Caco-2 (cell line): ENCODE measurements at regions of chr11 and their contacts with region 1.

Region 1: DNA sequence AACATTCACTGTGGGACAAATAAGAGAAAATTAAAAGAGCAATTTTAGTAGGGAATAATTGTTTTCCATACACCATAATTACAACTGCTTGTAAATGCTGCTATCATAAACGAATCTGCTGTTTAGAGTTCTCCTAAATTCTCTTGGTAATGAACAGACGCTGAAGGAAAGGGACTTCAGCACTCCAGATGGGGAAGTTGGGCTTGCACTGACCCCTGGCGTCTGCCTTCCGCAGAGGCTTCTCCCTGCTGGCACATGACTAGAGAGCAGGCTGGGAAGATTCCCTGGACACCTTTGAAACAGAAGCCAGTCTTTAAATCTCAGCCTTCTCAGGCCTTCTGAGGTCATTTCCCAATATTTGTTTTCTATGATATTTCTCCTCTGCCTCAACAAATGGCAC is 84.1 kb downstream of the NXPE2 start:
- DNase-seq: peak; percentile 78 to 81
- H3K4me3 ChIP-seq: no peak overlapping the region
- H3K4me3 Mint-ChIP-seq: no peak overlapping the region
- H3K27ac Mint-ChIP-seq: no peak overlapping the region
- H3K4me1 ChIP-seq: no peaks in the 10 kb centered on the region
- H3K4me1 Mint-ChIP-seq: no peaks in the 10 kb centered on the region
- H3K27me3 ChIP-seq: no peaks in the 10 kb centered on the region; the same call in 1 of the 2 replicates
- H3K27me3 Mint-ChIP-seq: peaks cover 23% of the 10 kb centered on the region
- CTCF ChIP-seq: peak; percentile 92 to 98

Region 2: GRCh38 chr11:114317787-114318137 is 444.6 kb before region 1 on chr11:
- CTCF ChIA-PET with region 1: no interaction called
- POLR2A ChIA-PET with region 1: no interaction called
- intact Hi-C with region 1: loop called (anchors 1 kb)
- DNase-seq: peak; percentile 52 to 57
- H3K4me3 ChIP-seq: no peak overlapping the region
- H3K4me3 Mint-ChIP-seq: no peak overlapping the region
- H3K27ac Mint-ChIP-seq: no peak overlapping the region
- H3K4me1 ChIP-seq: peaks cover 20% of the 10 kb centered on the region
- H3K4me1 Mint-ChIP-seq: peaks cover 14% of the 10 kb centered on the region
- H3K27me3 ChIP-seq: no peaks in the 10 kb centered on the region
- H3K27me3 Mint-ChIP-seq: peaks cover 3% of the 10 kb centered on the region
- CTCF ChIP-seq: peak; percentile 32 to 48

Region 3: GRCh38 chr11:114501901-114502300 is 260.5 kb before region 1 on chr11:
- CTCF ChIA-PET with region 1: no interaction called
- POLR2A ChIA-PET with region 1: no interaction called
- intact Hi-C with region 1: loop called (anchors 1 kb)
- DNase-seq: no peak
- H3K4me3 ChIP-seq: no peak overlapping the region
- H3K4me3 Mint-ChIP-seq: no peak overlapping the region
- H3K27ac Mint-ChIP-seq: no peak overlapping the region
- H3K4me1 ChIP-seq: no peaks in the 10 kb centered on the region
- H3K4me1 Mint-ChIP-seq: no peaks in the 10 kb centered on the region
- H3K27me3 ChIP-seq: no peaks in the 10 kb centered on the region
- H3K27me3 Mint-ChIP-seq: peaks cover 5% of the 10 kb centered on the region
- CTCF ChIP-seq: no peak

Region 4: GRCh38 chr11:114738954-114739353 is 23.5 kb before region 1 on chr11:
- CTCF ChIA-PET with region 1: interaction called, 4 read pairs
- POLR2A ChIA-PET with region 1: no interaction called
- intact Hi-C with region 1: loop called (anchors 1 kb)
- DNase-seq: peak; percentile 63 to 67
- H3K4me3 ChIP-seq: no peak overlapping the region
- H3K4me3 Mint-ChIP-seq: no peak overlapping the region
- H3K27ac Mint-ChIP-seq: no peak overlapping the region
- H3K4me1 ChIP-seq: no peaks in the 10 kb centered on the region
- H3K4me1 Mint-ChIP-seq: no peaks in the 10 kb centered on the region
- H3K27me3 ChIP-seq: no peaks in the 10 kb centered on the region
- H3K27me3 Mint-ChIP-seq: peaks cover 13% of the 10 kb centered on the region
- CTCF ChIP-seq: peak; percentile 90 to 97